Left colon (tissue), 2 donors: ENCODE measurements at regions of chr10 and their contacts with region 1.

Region 1: GRCh38 chr10:69392481-69393000 is 24.2 kb downstream of the TACR2 start:
- DNase-seq: peak; percentile 80 to 85
- ATAC-seq: peak; percentile 93

Region 2: DNA sequence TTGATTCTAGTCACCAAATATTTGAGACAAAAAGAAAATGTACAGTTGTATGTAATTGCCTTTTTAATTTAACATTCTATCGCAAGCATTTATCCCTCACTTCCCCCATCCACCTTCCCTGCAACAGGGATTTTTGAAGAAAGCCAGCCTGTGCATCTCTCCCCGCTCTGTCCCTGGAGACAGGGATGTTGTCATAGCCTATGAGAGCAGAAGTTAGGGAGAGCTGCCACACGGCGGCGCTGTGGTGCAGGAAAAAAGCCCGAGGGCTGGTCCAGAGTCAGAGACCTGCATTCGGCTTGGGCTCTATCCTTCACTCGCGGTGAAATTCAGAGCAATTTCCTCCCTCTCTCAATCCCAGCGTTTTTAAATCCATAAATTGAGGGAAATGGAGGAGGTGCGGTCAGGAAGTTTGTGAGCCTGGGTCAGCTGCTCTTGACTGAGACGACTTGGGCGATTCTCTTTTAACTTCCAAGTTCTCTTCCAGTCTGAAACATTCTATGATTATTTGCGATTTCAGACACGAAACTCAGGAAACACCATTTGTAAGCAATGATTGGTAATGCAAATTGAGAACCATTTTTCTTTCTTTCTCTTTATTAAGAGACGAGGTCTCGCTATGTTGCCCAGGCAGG is 154.9 kb before region 1 on chr10:
- intact Hi-C with region 1: loop called (anchors 5 kb)
- DNase-seq: peak; percentile 69 to 89
- ATAC-seq: peak; percentile 79

Region 3: GRCh38 chr10:69327463-69328379 is 64.8 kb before region 1 on chr10:
- intact Hi-C with region 1: loop called in 1 of 2 experiments (anchors 10 kb)
- DNase-seq: peak; percentile 80 to 83
- ATAC-seq: peak; percentile 72